ENCODE measurements at regions of chr15 and their contacts with region 1.

Region 1: DNA sequence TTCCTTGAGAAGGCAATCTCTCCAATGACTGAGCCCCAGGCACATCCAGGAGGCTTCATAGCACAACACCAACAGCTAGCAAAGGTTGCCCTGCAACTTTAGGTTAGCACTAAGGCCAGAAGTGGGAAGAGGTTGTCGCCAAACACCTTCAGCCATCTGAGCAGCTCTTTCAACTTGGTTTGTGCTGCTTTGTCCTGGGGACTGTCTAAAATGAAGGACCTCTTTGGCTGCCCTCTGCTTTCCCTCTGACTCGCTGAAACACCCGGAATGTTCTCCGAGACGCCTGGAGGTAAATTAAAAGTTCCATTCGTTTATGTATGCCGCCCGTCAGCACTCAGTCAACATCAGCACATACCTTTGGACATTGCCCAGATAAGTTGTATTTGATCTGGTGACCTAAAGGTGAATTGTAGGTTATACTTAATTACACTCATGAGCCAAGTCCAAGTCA is 121.2 kb upstream of the NR2F2 start:
- DNase-seq: no peak
- ATAC-seq: no peak

Region 2: GRCh38 chr15:96285305-96285704 is 76.0 kb after region 1 on chr15:
- intact Hi-C with region 1: loop called in 1 of 2 experiments (anchors 10 kb)
- DNase-seq: peak; percentile 29
- ATAC-seq: peak; percentile 24 to 84

Measured in left cardiac atrium (tissue), 4 donors.